ENCODE measurements at regions of chr6 and their contacts with region 1.

Region 1: GRCh38 chr6:135647521-135647920 is 150.0 kb upstream of the AHI1 start:
- DNase-seq: peak; percentile 20
- H3K4me3 Mint-ChIP-seq: no peak overlapping the region
- H3K27ac Mint-ChIP-seq: no peak overlapping the region
- H3K4me1 Mint-ChIP-seq: peaks cover 25% of the 10 kb centered on the region
- H3K27me3 Mint-ChIP-seq: no peaks in the 10 kb centered on the region

Region 2: GRCh38 chr6:135568366-135568765 is 79.2 kb before region 1 on chr6:
- CTCF ChIA-PET with region 1: no interaction called
- POLR2A ChIA-PET with region 1: no interaction called
- intact Hi-C with region 1: loop called (anchors 1 kb)
- DNase-seq: peak; percentile 58
- H3K4me3 Mint-ChIP-seq: no peak overlapping the region
- H3K27ac Mint-ChIP-seq: no peak overlapping the region
- H3K4me1 Mint-ChIP-seq: peaks cover 12% of the 10 kb centered on the region
- H3K27me3 Mint-ChIP-seq: no peaks in the 10 kb centered on the region